ENCODE measurements at regions of chr3 and their contacts with region 1.

Region 1: DNA sequence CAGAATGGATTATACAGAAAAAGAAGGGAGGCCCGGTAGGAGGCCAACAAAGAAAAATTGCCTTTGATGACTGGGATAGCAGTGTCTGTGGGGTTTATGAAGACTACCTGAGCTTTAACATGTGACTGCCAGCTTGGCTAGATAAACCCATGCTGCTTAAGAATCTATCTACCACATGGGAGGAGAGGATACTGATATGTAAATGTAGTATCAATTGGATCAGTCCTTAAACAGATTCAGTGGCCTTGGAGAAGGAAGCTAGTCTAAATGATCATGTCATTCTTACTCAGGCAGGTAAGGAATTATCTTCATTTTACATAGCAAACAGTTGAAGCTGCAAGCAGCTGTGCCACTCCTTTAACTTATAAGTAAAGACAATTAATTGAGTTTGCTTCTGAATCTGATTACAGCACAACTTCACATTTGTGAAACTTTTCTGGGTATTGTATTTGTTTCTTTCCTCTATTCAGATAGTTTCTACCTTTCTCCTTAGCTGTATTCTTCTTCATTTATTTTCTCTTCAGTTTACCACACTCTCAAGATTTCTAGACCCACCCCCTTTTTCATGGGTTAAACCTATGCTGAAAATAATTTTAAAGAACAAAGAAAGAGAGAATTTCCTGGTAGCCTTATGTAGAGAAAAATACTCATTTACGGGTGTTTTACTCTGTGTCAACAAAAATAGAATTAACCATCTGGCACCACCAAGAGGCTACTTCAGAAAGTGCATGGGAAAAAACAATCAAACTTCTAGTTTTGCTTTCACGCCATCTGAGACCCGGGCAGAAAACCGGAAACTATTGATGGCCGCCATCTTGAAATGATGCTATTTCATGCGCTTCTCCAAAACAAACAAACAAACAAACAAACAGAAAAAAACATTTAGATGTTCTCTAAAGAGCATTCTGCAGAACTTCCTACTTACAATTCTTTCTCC is 49.8 kb upstream of the SYNPR start:
- DNase-seq: peak; percentile 5
- H3K4me3 Mint-ChIP-seq: no peak overlapping the region
- H3K27ac Mint-ChIP-seq: no peak overlapping the region
- H3K4me1 Mint-ChIP-seq: peaks cover 2% of the 10 kb centered on the region
- H3K27me3 Mint-ChIP-seq: no peaks in the 10 kb centered on the region

Region 2: GRCh38 chr3:62201438-62202035 is 1026.8 kb before region 1 on chr3:
- CTCF ChIA-PET with region 1: no interaction called
- intact Hi-C with region 1: loop called (anchors 5 kb)
- DNase-seq: peak; percentile 10
- H3K4me3 Mint-ChIP-seq: no peak overlapping the region
- H3K27ac Mint-ChIP-seq: no peak overlapping the region
- H3K4me1 Mint-ChIP-seq: no peaks in the 10 kb centered on the region
- H3K27me3 Mint-ChIP-seq: peaks cover 2% of the 10 kb centered on the region

Region 3: DNA sequence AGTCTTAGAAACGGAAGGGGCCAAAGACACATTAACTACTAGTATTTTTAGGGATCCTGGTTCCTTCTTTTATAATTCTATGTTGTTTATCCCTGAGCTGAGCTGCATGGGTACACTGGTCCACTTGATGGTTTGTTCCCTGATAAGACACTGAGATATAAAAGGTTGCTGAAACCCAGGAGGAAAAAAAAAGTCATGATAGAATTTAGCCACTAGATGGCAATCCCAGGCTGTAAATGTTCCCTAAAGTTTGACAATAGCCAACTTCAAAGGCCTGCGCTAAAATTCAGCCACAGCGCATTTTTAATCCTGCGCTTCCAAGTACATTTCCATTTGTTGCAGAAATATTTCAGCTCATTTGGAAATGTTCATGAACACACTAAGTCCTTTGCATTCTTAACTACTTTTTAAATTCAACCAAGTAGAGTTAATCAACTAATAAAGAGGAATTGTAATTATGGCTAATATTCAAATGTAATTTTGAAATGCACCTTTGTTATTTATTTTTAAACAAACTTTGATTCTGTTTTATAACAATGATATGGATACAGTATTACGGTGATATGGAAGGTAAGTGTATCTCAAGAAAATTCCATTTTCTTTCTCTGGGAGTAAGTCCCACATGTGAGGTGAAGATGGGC is 605.7 kb before region 1 on chr3:
- CTCF ChIA-PET with region 1: interaction called, 4 read pairs
- intact Hi-C with region 1: loop called (anchors 1 kb)
- DNase-seq: peak; percentile 4
- H3K4me3 Mint-ChIP-seq: no peak overlapping the region
- H3K27ac Mint-ChIP-seq: no peak overlapping the region
- H3K4me1 Mint-ChIP-seq: no peaks in the 10 kb centered on the region
- H3K27me3 Mint-ChIP-seq: peaks cover 26% of the 10 kb centered on the region

Region 4: DNA sequence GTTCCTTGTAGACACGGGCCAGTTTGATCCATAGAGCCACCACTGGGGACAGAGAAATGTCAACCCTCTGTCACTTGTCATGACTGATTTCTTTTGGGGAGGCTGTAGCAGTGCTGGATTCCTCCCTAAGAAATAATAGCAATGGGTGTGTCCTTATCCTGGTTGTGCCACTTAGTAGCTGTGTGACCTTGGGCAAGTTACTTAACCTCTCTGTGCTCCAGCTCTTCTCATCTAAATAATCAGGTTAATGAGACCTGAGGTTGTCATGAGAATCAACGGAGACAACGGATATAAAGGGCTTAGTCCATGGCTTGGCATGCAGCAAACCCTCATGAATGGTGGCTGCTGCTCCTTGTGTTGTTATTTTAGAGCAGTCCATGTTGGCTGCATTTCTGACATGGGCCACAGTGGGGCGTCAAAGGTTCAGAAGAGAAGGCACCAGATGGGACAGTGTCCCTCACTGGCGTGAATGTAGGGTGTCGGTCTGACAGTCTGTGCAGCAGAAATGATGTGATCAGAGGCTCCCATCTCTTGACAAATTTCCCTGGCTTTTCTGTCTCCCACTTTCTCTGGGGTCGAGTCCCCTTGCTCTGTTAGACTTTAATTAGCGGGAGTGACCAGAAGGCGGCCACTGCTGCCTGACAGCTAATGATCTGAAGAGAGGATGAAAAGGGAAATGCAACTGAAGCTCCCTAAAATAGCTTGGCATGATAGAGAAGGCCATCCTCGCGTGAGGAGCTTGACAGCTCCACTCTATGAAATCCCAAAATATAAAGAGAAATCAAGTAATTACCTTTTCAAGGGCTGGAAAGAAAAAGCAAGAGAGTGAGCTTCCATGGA is 562.5 kb before region 1 on chr3:
- CTCF ChIA-PET with region 1: interaction called, 4 read pairs
- intact Hi-C with region 1: loop called (anchors 1 kb)
- DNase-seq: peak; percentile 59
- H3K4me3 Mint-ChIP-seq: no peak overlapping the region
- H3K27ac Mint-ChIP-seq: no peak overlapping the region
- H3K4me1 Mint-ChIP-seq: no peaks in the 10 kb centered on the region
- H3K27me3 Mint-ChIP-seq: peaks cover 7% of the 10 kb centered on the region

Region 5: GRCh38 chr3:63450023-63450422 is 221.7 kb after region 1 on chr3:
- CTCF ChIA-PET with region 1: no interaction called
- intact Hi-C with region 1: no loop called
- DNase-seq: no peak
- H3K4me3 Mint-ChIP-seq: no peak overlapping the region
- H3K27ac Mint-ChIP-seq: no peak overlapping the region
- H3K4me1 Mint-ChIP-seq: no peaks in the 10 kb centered on the region
- H3K27me3 Mint-ChIP-seq: peaks cover 2% of the 10 kb centered on the region

Region 6: GRCh38 chr3:63818281-63819150 is 590.2 kb after region 1 on chr3:
- CTCF ChIA-PET with region 1: no interaction called
- intact Hi-C with region 1: loop called (anchors 10 kb)
- DNase-seq: peak; percentile 75
- H3K4me3 Mint-ChIP-seq: no peak overlapping the region
- H3K27ac Mint-ChIP-seq: no peak overlapping the region
- H3K4me1 Mint-ChIP-seq: peaks cover 2% of the 10 kb centered on the region
- H3K27me3 Mint-ChIP-seq: no peaks in the 10 kb centered on the region